Uterus (tissue), 4 donors: ENCODE measurements at regions of chr19 and their contacts with region 1.

Region 1: GRCh38 chr19:2273356-2274184 is 8.4 kb downstream of the PEAK3 start:
- DNase-seq: peak; percentile 53 to 77
- H3K4me3 ChIP-seq: no peak overlapping the region
- H3K27ac ChIP-seq: peak overlapping the region; percentile 98 to 100
- H3K4me1 ChIP-seq: peaks cover 3 to 15% of the 10 kb centered on the region in 2 donors
- H3K27me3 ChIP-seq: no peaks in the 10 kb centered on the region
- CTCF ChIP-seq: peak; percentile 91 to 97 (median 94)
- POLR2A ChIP-seq: no peak

Region 2: DNA sequence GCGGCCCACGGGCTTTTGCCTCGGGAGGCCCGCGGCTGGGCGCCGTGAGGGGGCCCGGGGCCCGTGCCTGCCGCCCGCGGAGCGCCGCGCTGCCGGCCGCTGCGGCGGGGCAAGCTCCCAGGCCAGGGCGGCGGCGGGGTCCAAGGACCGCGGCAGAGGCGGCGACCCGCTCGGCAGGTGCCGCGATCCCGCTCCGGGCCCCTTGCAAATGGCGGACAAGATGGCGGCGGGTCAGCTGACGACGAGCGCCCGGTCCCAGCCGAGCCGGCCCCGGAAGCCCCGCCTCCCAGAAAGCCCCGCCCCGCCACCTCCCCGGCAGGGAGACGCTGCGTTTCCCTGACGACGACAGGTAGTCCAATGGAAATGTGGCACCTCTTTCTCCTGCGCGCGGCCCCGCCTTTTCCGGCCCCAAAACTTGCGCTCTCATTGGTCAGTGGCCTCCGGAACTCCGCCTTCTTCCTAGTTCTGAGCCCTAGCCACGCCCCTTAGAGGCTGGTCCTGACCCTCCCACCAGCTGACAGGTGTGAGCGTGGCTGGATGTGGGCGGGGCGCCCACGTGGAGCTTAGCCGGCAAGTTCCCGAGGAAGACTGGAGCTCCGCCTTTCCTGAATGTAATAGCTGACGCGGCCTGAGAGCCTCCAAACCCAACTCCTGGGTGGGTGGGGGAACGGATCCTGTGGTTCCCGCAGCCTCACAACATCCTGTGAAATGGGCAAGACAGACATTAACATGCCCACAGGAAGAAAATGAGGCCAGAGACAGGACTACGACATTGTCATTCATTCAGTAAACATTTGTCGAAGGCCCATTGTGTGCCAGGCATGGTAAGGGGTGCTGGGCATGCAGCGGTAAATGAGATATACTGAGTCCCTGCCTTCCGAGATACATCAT is 122.0 kb before region 1 on chr19 and contains the start of gene AP3D1:
- intact Hi-C with region 1: loop called (anchors 10 kb)
- DNase-seq: peak; percentile 100
- H3K4me3 ChIP-seq: peak within 1 kb of the TSS; percentile 52 to 78
- H3K27ac ChIP-seq: peak within 1 kb of the TSS; percentile 70 to 82
- H3K4me1 ChIP-seq: peaks cover 0 to 11% of the 10 kb centered on the region in 2 donors
- H3K27me3 ChIP-seq: no peaks in the 10 kb centered on the region
- CTCF ChIP-seq: peak in 2 of 4 experiments; percentile 11 to 19
- POLR2A ChIP-seq: peak; percentile 21 to 66
- total RNA-seq, gene AP3D1: 33.8 to 97.5 (median 49.8) TPM

Region 3: GRCh38 chr19:2236314-2237050 is 37.1 kb before region 1 on chr19 and contains the starts of genes PLEKHJ1 and SF3A2:
- intact Hi-C with region 1: loop called (anchors 5 kb)
- DNase-seq: peak; percentile 97 to 99
- H3K4me3 ChIP-seq: peak within 1 kb of the TSS; percentile 92 to 93
- H3K27ac ChIP-seq: peak within 1 kb of the TSS; percentile 99
- H3K4me1 ChIP-seq: peaks cover 13 to 45% of the 10 kb centered on the region in 2 donors
- H3K27me3 ChIP-seq: no peaks in the 10 kb centered on the region
- CTCF ChIP-seq: peak; percentile 99 to 100 (median 99)
- POLR2A ChIP-seq: peak; percentile 47 to 76
- total RNA-seq, gene PLEKHJ1: 5.9 to 56.7 (median 30.1) TPM
- total RNA-seq, gene SF3A2: 33.2 to 107 (median 50.6) TPM

Region 4: DNA sequence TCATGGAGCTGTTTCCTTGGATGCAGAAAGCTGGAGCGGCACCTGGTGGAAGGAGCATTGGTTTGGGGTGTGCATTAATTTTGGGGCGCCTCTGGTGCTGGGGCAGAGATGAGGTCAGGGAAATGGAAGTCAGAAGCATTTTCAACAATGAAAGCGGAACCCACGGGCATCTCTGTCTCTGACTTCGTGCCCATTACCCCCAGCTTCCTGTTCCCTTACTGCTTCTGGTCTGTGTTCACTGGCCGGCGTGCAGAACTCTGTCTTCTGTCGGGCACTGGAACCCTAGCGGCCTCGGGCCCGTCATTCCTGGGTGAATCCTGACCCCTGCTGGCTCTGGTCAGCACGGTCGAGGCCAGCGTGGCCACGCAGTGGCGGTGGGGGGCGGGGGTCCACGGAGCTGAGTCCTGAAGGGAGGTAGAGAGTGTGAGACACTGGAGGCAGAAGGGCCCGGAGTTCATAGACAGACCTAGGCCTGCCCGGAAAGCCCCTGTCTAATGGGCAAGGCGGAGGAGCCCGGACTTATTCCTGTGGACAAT is 42.3 kb after region 1 on chr19:
- intact Hi-C with region 1: no loop called
- DNase-seq: no peak
- H3K4me3 ChIP-seq: no peak overlapping the region
- H3K27ac ChIP-seq: no peak overlapping the region
- H3K4me1 ChIP-seq: no peaks in the 10 kb centered on the region
- H3K27me3 ChIP-seq: peaks cover 0 to 11% of the 10 kb centered on the region in 2 donors
- CTCF ChIP-seq: peak in 3 of 4 experiments; percentile 35 to 59 (median 55)
- POLR2A ChIP-seq: no peak